WTC11 (cell line): ENCODE measurements at regions of chr13 and their contacts with region 1.

Region 1: GRCh38 chr13:36999054-36999714 is at the start of gene ALG5:
- DNase-seq: peak; percentile 89
- ATAC-seq: peak; percentile 72
- H3K4me3 Mint-ChIP-seq: peak within 1 kb of the TSS; percentile 100
- H3K27ac Mint-ChIP-seq: peak within 1 kb of the TSS; percentile 100
- H3K4me1 Mint-ChIP-seq: peaks cover 19% of the 10 kb centered on the region
- H3K27me3 Mint-ChIP-seq: no peaks in the 10 kb centered on the region; the same call in 1 of the 2 replicates
- CTCF ChIP-seq: peak; percentile 97
- total RNA-seq, gene ALG5: 18.4 to 19.8 TPM (median 19.6 TPM) in 3 replicates

Region 2: DNA sequence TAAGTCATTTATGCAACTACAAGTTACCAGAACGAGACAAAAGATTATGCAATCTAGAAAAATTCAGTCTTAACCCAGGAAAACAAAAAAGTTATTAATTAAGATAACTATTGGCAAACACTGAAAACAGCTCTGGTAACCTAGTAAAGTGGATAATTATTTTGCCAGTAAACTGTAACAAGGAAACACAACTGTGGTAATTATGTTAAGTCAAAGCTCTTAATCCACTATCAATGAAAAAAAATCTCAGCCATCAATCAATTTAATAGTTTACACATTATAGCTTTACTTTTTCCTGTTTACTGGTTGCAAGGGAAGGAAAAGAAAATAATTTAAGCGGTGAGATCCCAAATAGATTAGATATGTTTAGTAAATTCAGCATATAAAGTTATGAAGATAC is 12.6 kb after region 1 on chr13:
- CTCF ChIA-PET with region 1: interaction called, 5 read pairs
- POLR2A ChIA-PET with region 1: interaction called, 10 read pairs
- DNase-seq: no peak
- ATAC-seq: no peak
- H3K4me3 Mint-ChIP-seq: no peak overlapping the region
- H3K27ac Mint-ChIP-seq: no peak overlapping the region
- H3K4me1 Mint-ChIP-seq: peaks cover 10% of the 10 kb centered on the region
- H3K27me3 Mint-ChIP-seq: no peaks in the 10 kb centered on the region
- CTCF ChIP-seq: no peak